ENCODE measurements at regions of chr18 and their contacts with region 1.

Region 1: DNA sequence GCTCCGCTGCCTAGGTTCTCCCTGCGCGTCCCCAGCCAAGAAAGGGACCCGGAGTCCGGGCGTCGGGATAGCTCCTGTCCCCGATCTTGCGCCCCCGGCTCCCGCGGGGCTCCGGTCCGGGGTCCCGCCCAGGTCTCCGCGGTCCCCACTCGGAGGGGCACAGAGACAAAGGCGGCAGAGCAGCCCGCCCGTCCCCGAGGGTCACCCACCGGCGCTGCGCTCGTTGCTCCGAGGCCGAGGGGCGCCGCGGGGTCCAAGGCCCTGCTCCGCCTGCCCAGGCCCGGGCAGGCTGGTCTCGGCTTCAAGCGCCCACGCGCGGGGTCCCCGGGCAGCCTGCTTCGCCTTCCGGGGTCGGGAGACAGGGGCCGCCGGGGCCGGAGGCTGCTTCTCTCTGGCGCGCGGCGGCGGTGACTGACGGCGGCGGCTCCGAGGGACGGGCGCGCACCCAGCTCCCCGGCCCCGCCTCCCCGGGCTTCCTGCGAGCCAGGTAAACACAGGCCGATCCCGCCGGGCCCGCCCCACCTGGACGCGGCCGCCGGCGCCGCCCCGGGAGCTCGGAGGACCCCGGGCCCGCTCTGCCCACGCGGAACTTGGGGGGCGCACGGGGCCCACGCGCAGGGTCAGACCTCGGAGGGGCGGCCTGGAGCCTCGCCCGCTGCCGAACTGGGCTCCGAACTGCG is at the start of gene MBP:
- DNase-seq: peak; percentile 83
- ATAC-seq: peak; percentile 59
- H3K4me3 Mint-ChIP-seq: peak within 1 kb of the TSS; percentile 99
- H3K27ac Mint-ChIP-seq: peak within 1 kb of the TSS; percentile 98
- H3K4me1 Mint-ChIP-seq: peaks cover 52% of the 10 kb centered on the region
- H3K27me3 Mint-ChIP-seq: no peaks in the 10 kb centered on the region
- total RNA-seq, gene MBP: 47.0 to 65.7 TPM

Region 2: DNA sequence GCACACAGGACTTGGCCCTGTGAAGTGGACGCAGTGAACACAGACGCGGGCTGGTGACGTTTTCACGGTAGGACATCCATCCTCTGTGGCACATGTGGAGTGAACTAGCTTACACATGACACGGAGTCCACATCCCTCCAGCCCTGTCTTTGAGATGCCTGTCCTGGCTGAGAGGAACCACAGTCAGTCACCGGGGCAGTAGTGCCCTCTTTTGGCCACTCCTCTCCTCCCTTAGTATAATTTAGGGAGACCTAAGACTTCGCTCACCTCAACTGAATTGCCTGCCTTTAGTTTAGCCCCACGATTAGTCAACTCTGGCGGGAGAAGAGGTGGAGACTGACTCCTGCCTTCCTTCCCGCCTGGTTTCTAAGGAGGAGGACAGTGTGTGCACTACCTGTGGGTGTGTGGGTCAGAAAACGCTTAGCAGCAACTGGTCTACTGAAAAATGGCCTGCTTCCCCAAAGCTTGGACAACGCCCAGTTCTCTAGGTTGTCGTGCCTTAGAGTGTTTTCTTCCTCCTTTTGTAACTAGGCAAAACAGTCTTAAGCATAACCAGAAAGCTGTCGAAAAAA is 70.5 kb before region 1 on chr18:
- CTCF ChIA-PET with region 1: interaction called, 4 read pairs
- POLR2A ChIA-PET with region 1: interaction called, 13 read pairs
- intact Hi-C with region 1: loop called (anchors 1 to 2 kb)
- DNase-seq: peak; percentile 42
- ATAC-seq: peak; percentile 17
- H3K4me3 Mint-ChIP-seq: peak overlapping the region; percentile 47
- H3K27ac Mint-ChIP-seq: peak overlapping the region; percentile 98
- H3K4me1 Mint-ChIP-seq: peaks cover 83% of the 10 kb centered on the region
- H3K27me3 Mint-ChIP-seq: no peaks in the 10 kb centered on the region

Region 3: GRCh38 chr18:77108001-77108692 is 24.4 kb before region 1 on chr18:
- CTCF ChIA-PET with region 1: interaction called, 10 read pairs
- POLR2A ChIA-PET with region 1: interaction called, 11 read pairs
- intact Hi-C with region 1: loop called in 1 of 2 experiments (anchors 1 kb)
- DNase-seq: peak; percentile 69
- ATAC-seq: peak; percentile 79
- H3K4me3 Mint-ChIP-seq: peak overlapping the region; percentile 18
- H3K27ac Mint-ChIP-seq: peak overlapping the region; percentile 18
- H3K4me1 Mint-ChIP-seq: peaks cover 94% of the 10 kb centered on the region
- H3K27me3 Mint-ChIP-seq: no peaks in the 10 kb centered on the region

Measured in activated CD4-positive, alpha-beta T cell treated with anti-CD3 and anti-CD28 coated beads for 36 hours (primary cell).